ENCODE measurements at regions of chr7 and their contacts with region 1.

Region 1: GRCh38 chr7:51366930-51367613 is 50.5 kb upstream of the COBL start:
- DNase-seq: peak; percentile 43
- ATAC-seq: peak; percentile 96
- H3K4me3 ChIP-seq: no peak overlapping the region
- H3K27ac ChIP-seq: no peak overlapping the region
- H3K4me1 ChIP-seq: peaks cover 16% of the 10 kb centered on the region; the same call in 1 of the 2 replicates
- H3K27me3 ChIP-seq: 0 out of 5 replicates have a peak, but pooled peaks cover 0 to 1% of the 10 kb centered on the region in 2 experiments
- CTCF ChIP-seq: peak; percentile 91
- EP300 ChIP-seq: no peak
- POLR2A ChIP-seq: no peak
- RAD21 ChIP-seq: peak; percentile 80

Region 2: DNA sequence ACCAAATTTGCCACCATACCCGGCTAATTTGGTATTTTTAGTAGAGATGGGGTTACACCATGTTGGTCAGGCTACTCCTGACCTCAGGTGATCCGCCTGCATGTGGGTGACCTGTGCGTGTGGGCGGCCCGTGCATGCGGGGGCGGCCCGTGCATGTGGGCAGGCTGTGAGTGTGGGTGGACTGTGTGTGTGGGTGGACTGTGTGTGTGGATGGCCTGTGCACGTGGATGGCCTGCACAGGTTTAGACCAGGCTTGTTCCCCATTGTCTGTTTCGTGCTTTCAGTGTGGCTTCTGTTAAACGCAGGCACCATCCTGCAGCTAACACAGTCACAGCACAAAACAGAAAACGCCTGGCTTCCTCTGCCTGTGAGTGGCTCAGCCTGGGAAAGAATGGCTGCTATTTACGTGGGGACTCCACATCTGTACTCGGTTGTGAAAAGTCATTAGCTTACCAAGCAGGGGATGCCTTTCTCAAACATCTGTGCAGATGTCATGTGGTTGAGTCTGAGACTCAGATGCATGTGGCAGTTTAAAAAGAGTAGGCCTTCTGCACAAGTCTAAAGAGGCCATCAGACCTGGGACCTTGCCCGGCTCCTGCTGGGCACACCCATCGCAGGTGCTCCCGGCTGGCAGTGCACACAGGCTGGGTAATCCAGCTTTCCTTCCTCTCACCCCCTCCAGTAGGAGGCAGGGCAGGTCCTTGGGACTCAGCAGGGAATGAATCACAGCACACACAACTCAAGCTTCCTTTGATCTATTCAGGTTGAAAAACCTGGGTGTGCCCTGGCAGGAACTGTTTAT is 142.1 kb before region 1 on chr7:
- CTCF ChIA-PET with region 1: interaction called, 6 read pairs
- POLR2A ChIA-PET with region 1: no interaction called
- in situ Hi-C with region 1: loop called (anchors 10 kb)
- intact Hi-C with region 1: loop called (anchors 1 kb)
- DNase-seq: peak; percentile 31
- ATAC-seq: peak; percentile 89
- H3K4me3 ChIP-seq: no peak overlapping the region
- H3K27ac ChIP-seq: no peak overlapping the region
- H3K4me1 ChIP-seq: no peaks in the 10 kb centered on the region
- H3K27me3 ChIP-seq: no peaks in the 10 kb centered on the region
- CTCF ChIP-seq: peak; percentile 69
- EP300 ChIP-seq: no peak
- POLR2A ChIP-seq: no peak
- RAD21 ChIP-seq: no peak

Region 3: DNA sequence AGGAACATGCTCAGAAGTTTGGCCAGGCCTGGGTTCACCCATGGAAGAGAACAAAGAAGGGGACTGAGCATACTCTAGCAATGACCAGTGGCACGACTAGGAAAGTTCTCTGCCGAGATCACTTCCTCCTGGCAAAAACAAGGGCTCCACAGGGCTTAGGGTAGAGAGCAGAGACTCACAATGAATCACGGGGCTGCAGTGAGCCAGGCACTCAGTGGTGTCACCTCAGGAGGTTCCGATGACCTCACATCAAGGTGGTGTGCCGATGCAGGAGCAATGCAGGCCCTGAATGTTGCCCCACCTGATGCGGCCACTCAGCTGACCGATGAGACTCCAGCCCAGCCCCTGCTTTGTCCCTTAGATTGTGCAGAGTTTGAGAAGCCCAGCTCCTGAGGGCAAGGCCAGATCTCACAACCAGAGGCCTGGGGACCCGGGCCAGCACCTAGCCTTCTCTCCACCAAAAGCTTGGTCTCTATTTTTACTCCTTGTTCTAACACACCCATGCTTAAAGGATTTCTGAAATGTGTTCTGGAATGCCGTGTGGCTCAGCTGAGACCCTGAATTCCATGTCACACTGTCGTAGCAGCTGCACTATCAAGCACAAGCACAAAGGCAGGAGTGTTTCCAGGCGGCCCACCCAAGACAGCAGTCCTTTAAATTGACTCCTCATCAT is 111.4 kb before region 1 on chr7:
- CTCF ChIA-PET with region 1: interaction called, 3 read pairs
- POLR2A ChIA-PET with region 1: no interaction called
- in situ Hi-C with region 1: loop called (anchors 10 kb)
- intact Hi-C with region 1: loop called (anchors 1 kb)
- DNase-seq: no peak
- ATAC-seq: peak; percentile 56
- H3K4me3 ChIP-seq: no peak overlapping the region
- H3K27ac ChIP-seq: no peak overlapping the region
- H3K4me1 ChIP-seq: peaks cover 26% of the 10 kb centered on the region
- H3K27me3 ChIP-seq: no peaks in the 10 kb centered on the region
- CTCF ChIP-seq: no peak
- EP300 ChIP-seq: no peak
- POLR2A ChIP-seq: no peak
- RAD21 ChIP-seq: no peak

Region 4: GRCh38 chr7:51315393-51316261 is 51.4 kb before region 1 on chr7:
- CTCF ChIA-PET with region 1: no interaction called
- POLR2A ChIA-PET with region 1: no interaction called
- in situ Hi-C with region 1: no loop called
- intact Hi-C with region 1: loop called (anchors 5 kb)
- DNase-seq: peak; percentile 73
- ATAC-seq: peak; percentile 83
- H3K4me3 ChIP-seq: peak overlapping the region; percentile 68 to 83 (median 69)
- H3K27ac ChIP-seq: peak overlapping the region; percentile 79
- H3K4me1 ChIP-seq: peaks cover 64% of the 10 kb centered on the region
- H3K27me3 ChIP-seq: no peaks in the 10 kb centered on the region; a peak in 1 of 5 replicates
- CTCF ChIP-seq: no peak
- EP300 ChIP-seq: peak in 1 of 2 experiments; percentile 36; a peak in 1 of 4 replicates
- POLR2A ChIP-seq: peak; percentile 51 to 84; a peak in 3 of 4 replicates
- RAD21 ChIP-seq: peak; percentile 42; the same call in 1 of the 2 replicates